H1 (cell line): ENCODE measurements at regions of chr2 and their contacts with region 1.

Region 1: GRCh38 chr2:235779444-235779896 is 285.6 kb downstream of the AGAP1 start:
- DNase-seq: peak; percentile 71 to 93
- H3K4me3 ChIP-seq: no peak overlapping the region
- H3K27ac ChIP-seq: no peak overlapping the region
- H3K4me1 ChIP-seq: no peaks in the 10 kb centered on the region
- H3K27me3 ChIP-seq: no peaks in the 10 kb centered on the region
- CTCF ChIP-seq: peak; percentile 84 to 95 (median 95)
- EP300 ChIP-seq: no peak
- POLR2A ChIP-seq: no peak
- RAD21 ChIP-seq: peak; percentile 97 to 98

Region 2: DNA sequence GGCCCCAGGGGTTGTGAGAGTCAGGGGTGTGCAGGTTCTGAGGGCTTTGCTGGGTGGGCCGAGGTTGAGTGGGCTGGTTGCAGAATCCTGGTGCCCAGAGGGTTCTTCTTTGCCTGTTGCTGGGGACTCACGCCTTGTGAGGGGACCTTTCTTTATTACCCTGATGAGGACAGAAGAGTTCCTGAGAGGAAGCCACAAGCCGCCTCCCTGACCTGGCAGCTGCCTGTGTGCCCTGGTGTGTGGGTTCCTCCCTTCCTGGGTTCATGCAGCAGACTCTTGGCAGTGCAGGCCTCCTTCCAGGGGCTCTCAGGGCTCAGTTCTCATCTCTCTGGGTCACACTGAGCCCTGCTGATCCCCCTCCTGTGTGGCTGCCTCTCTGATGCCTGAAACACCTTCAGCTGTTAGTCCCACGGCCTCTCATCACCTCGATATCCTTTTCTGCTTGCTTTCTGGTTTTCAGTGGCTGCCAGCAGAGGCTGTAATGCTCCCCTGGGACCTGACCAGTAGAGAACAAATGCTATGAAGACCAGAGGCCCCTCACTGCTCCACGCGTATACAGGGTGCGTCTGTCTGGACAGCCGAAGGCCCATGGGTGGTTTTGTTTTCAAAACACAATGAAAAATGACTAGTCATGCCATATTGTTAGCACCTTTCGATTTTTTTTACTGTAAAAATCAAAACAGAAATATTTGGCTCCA is 94.3 kb before region 1 on chr2:
- CTCF ChIA-PET with region 1: no interaction called
- POLR2A ChIA-PET with region 1: no interaction called
- DNase-seq: no peak
- H3K4me3 ChIP-seq: no peak overlapping the region
- H3K27ac ChIP-seq: no peak overlapping the region; the same call in 1 of the 2 replicates
- H3K4me1 ChIP-seq: no peaks in the 10 kb centered on the region; a peak in 2 of 7 replicates
- H3K27me3 ChIP-seq: no peaks in the 10 kb centered on the region
- CTCF ChIP-seq: no peak
- EP300 ChIP-seq: no peak
- POLR2A ChIP-seq: no peak
- RAD21 ChIP-seq: no peak

Region 3: GRCh38 chr2:235766278-235766677 is 13.2 kb before region 1 on chr2:
- CTCF ChIA-PET with region 1: interaction called, 44 read pairs
- POLR2A ChIA-PET with region 1: interaction called, 7 read pairs
- DNase-seq: peak in 1 of 2 experiments; percentile 73
- H3K4me3 ChIP-seq: no peak overlapping the region
- H3K27ac ChIP-seq: no peak overlapping the region
- H3K4me1 ChIP-seq: no peaks in the 10 kb centered on the region
- H3K27me3 ChIP-seq: no peaks in the 10 kb centered on the region
- CTCF ChIP-seq: peak; percentile 14 to 88 (median 69)
- EP300 ChIP-seq: no peak
- POLR2A ChIP-seq: no peak
- RAD21 ChIP-seq: peak; percentile 79 to 84

Region 4: GRCh38 chr2:235793163-235793752 is 13.8 kb after region 1 on chr2:
- CTCF ChIA-PET with region 1: interaction called, 113 read pairs
- POLR2A ChIA-PET with region 1: no interaction called
- DNase-seq: no peak
- H3K4me3 ChIP-seq: no peak overlapping the region
- H3K27ac ChIP-seq: no peak overlapping the region
- H3K4me1 ChIP-seq: peaks cover 0 to 3% (median 2%) of the 10 kb centered on the region in 4 experiments; a peak in 1 of 7 replicates
- H3K27me3 ChIP-seq: no peaks in the 10 kb centered on the region
- CTCF ChIP-seq: peak; percentile 61 to 84 (median 79)
- EP300 ChIP-seq: no peak
- POLR2A ChIP-seq: no peak
- RAD21 ChIP-seq: peak; percentile 63 to 70

Region 5: GRCh38 chr2:235936493-235936892 is 157.0 kb after region 1 on chr2:
- CTCF ChIA-PET with region 1: interaction called, 32 read pairs
- POLR2A ChIA-PET with region 1: no interaction called
- DNase-seq: no peak
- H3K4me3 ChIP-seq: no peak overlapping the region
- H3K27ac ChIP-seq: no peak overlapping the region
- H3K4me1 ChIP-seq: 0 out of 7 replicates have a peak, but pooled peaks cover 0 to 2% (median 0%) of the 10 kb centered on the region in 4 experiments
- H3K27me3 ChIP-seq: no peaks in the 10 kb centered on the region; a peak in 1 of 7 replicates
- CTCF ChIP-seq: peak; percentile 28 to 70 (median 60)
- EP300 ChIP-seq: no peak
- POLR2A ChIP-seq: no peak
- RAD21 ChIP-seq: peak; percentile 77 to 78